SK-N-SH (cell line): ENCODE measurements at regions of chr1 and their contacts with region 1.

Region 1: DNA sequence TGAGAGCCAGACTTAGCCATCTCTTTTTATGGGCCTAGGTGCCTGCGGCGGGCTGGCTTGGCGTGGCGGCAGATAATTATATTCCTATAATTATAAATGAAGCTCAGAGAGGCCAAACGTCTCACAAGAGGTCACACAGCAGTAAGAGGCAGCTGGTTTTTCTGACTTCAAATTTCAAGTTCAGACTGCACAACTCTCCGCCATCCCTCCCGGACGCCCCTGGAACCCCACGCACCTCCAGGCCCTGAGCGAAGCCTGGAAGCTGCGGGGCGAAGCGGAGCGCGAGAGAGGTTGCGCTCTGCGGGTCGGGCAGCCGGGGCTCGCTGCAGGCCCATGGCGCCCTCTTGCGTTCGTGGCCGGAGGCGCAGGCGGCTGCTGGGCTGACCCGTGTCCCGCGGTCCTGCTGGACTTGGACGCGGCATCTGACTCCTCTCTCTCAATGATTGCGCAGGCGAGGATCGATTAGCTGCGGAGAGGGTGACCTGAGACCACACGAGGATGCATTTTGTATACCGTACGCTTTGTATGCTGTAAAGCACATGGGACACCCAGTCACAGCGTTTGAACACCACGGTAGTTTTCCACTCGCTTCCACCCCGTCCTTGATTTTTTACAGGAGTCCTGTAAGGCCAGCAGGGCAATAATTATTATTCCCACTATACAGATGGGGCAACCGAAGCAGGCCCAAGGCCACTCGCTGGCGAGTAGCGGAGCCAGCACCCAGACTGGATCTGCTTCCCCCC is 272.7 kb downstream of the FOXD2 start:
- DNase-seq: peak; percentile 96
- H3K4me3 ChIP-seq: peak overlapping the region in 1 of 2 experiments; percentile 58; a peak in 1 of 4 replicates
- H3K27ac ChIP-seq: no peak overlapping the region
- H3K4me1 ChIP-seq: peaks cover 0 to 23% of the 10 kb centered on the region in 2 experiments; a peak in 1 of 4 replicates
- H3K27me3 ChIP-seq: peaks cover 68% of the 10 kb centered on the region
- CTCF ChIP-seq: peak; percentile 93
- EP300 ChIP-seq: no peak
- RAD21 ChIP-seq: peak; percentile 92

Region 2: GRCh38 chr1:47137925-47138615 is 572.4 kb before region 1 on chr1:
- CTCF ChIA-PET with region 1: no interaction called
- POLR2A ChIA-PET with region 1: no interaction called
- DNase-seq: no peak
- H3K4me3 ChIP-seq: no peak overlapping the region
- H3K27ac ChIP-seq: no peak overlapping the region
- H3K4me1 ChIP-seq: no peaks in the 10 kb centered on the region
- H3K27me3 ChIP-seq: no peaks in the 10 kb centered on the region
- CTCF ChIP-seq: no peak
- EP300 ChIP-seq: no peak
- RAD21 ChIP-seq: no peak

Region 3: DNA sequence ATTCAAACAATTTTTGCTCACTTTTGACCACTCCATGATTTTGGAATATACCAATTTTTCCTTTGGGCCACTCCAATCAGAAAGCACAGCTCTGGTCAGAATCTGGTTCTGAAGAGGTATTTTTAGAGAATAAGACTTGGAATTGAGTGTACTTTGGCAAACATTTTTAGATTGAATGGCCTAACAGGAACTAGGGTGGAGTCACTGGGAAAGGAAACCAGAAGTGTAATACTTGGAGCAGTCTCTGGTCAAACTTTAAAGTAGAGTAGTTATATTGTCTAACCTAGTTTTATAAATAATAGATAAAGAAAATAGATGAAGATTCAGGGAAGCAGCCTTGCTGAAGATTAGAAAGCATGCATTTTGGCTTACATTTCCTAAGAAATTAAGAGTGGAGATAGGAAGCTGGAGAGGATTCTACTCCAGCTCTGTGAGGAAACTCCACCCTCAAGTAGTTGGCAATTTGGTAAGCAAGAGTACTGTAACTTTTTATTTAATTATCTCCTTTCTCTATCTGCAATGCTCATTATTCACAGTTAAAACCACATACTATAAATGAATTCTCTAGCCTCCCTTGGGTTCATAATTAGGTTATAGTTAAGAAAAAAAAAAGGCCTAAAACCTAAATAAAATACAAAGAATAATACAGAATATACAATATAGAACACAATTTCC is 412.3 kb before region 1 on chr1:
- CTCF ChIA-PET with region 1: no interaction called
- POLR2A ChIA-PET with region 1: no interaction called
- DNase-seq: no peak
- H3K4me3 ChIP-seq: no peak overlapping the region
- H3K27ac ChIP-seq: no peak overlapping the region
- H3K4me1 ChIP-seq: no peaks in the 10 kb centered on the region; a peak in 1 of 4 replicates
- H3K27me3 ChIP-seq: no peaks in the 10 kb centered on the region
- CTCF ChIP-seq: no peak
- EP300 ChIP-seq: no peak
- RAD21 ChIP-seq: no peak

Region 4: DNA sequence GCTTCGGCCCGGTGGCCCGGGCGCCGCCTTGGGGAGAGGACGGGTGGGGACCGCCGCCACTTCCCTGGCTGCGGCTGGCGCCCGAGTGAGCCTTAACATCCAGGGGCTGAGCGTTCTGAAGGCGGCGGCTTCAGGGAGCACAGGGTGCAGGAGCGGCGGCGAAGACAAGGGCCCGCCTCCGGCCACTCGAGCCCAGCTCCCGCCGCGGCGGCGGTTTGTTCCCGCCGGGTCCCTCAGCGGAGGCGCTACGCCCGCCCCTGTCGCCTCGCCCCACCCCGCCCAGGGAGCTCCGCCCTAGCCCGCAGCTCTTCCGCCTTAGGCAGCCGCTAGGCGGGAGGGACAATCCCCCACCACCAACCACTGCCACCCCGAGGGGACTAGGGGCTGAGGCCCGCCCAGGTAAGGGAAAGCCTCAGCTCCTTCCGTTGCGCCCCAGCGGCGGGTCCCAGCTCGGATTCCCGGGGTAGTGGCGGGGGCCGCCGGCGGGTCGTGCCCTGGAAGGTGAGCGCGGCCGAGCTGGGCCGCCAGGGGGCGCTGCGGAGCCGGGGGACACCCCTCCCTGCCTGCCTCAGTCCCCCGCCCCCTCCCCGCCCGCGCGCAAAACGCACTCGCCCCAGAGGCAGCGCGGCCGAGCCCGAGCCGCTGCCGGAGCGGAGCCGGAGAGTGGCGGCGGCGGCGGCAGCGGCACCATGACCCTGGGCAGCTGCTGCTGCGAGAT is 272.9 kb before region 1 on chr1 and contains the start of gene FOXD2:
- CTCF ChIA-PET with region 1: interaction called, 1,422 read pairs
- POLR2A ChIA-PET with region 1: interaction called, 3 read pairs
- DNase-seq: peak; percentile 96
- H3K4me3 ChIP-seq: peak within 1 kb of the TSS; percentile 49 to 87
- H3K27ac ChIP-seq: no peak within 1 kb of the TSS
- H3K4me1 ChIP-seq: peaks cover 0 to 10% of the 10 kb centered on the region in 2 experiments; a peak in 1 of 4 replicates
- H3K27me3 ChIP-seq: peaks cover 82% of the 10 kb centered on the region
- CTCF ChIP-seq: peak; percentile 84
- EP300 ChIP-seq: no peak
- RAD21 ChIP-seq: peak; percentile 19; the same call in 1 of the 2 replicates
- polyA plus RNA-seq, gene FOXD2: not detected in 2 replicates

Region 5: DNA sequence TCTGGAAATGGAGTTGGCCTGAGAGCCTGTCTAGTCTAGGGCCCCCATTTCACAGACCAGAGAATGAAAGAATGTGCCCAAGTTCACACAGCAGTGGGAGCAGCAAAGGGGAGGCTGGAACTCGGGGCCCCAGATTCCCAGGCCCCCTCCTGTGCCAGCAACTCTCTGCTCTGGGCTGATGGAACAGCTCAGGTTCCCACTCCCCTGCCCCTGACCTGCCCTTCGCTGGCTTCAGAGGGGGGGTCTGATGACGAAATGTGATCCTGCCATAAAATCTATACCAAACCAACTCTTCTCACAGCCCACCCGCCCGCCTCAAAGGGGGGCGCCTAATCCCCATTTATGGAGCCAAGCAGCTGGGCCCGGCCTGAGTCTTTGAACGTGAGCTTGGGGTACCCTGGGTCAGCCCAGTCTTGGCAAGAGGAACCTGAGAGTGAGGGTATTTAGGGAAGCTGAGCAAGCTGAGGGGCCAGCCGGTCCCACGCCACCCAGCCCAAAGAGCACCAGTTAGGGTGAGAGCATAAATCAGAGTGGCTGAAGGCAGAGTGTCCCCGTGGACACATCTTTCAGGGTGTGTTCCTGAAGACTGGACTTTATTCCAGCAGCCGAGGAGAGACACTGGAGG is 207.6 kb before region 1 on chr1:
- CTCF ChIA-PET with region 1: interaction called, 28 read pairs
- POLR2A ChIA-PET with region 1: no interaction called
- DNase-seq: no peak
- H3K4me3 ChIP-seq: no peak overlapping the region
- H3K27ac ChIP-seq: no peak overlapping the region
- H3K4me1 ChIP-seq: peaks cover 0 to 3% of the 10 kb centered on the region in 2 experiments; a peak in 1 of 4 replicates
- H3K27me3 ChIP-seq: peaks cover 13% of the 10 kb centered on the region
- CTCF ChIP-seq: no peak
- EP300 ChIP-seq: no peak
- RAD21 ChIP-seq: no peak

Region 6: DNA sequence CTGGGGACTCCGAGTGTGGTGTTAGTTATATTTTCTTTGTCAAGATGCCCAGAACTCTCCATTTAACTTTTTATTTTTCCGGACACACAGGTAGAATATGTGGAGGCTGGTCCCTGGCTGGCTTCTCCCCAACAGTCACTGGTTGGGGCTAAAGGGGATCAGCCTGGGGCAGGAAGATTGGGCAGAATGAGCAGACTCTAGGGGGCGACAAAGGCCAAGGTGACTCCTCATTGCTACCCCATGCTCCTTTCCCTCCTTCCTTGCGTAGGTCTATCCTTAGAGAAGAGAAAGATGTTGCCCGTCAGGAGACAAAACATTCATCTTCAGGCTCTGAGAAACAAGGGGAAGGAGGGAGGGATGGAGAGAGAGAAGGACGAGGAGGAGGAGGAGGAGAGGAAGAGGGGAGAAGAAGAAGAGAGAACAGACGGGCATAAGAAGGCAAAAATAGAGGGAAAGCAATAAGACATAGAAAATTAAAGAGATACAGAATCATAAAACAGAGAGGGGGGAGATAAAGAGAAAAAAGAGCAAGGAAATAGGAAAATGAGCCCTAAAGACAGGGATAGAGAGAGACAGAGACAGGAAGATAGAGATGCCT is 182.7 kb before region 1 on chr1:
- CTCF ChIA-PET with region 1: interaction called, 24 read pairs
- POLR2A ChIA-PET with region 1: no interaction called
- DNase-seq: no peak
- H3K4me3 ChIP-seq: no peak overlapping the region
- H3K27ac ChIP-seq: no peak overlapping the region
- H3K4me1 ChIP-seq: peaks cover under 1 to 2% of the 10 kb centered on the region in 2 experiments; a peak in 2 of 4 replicates
- H3K27me3 ChIP-seq: no peaks in the 10 kb centered on the region
- CTCF ChIP-seq: peak; percentile 21; the same call in 1 of the 2 replicates
- EP300 ChIP-seq: no peak
- RAD21 ChIP-seq: peak; percentile 44

Region 7: GRCh38 chr1:47684964-47685762 is 25.3 kb before region 1 on chr1:
- CTCF ChIA-PET with region 1: interaction called, 23 read pairs
- POLR2A ChIA-PET with region 1: no interaction called
- DNase-seq: peak; percentile 74
- H3K4me3 ChIP-seq: no peak overlapping the region
- H3K27ac ChIP-seq: peak overlapping the region in 1 of 2 experiments; percentile 32; a peak in 1 of 4 replicates
- H3K4me1 ChIP-seq: peaks cover 0 to 19% of the 10 kb centered on the region in 2 experiments; a peak in 2 of 4 replicates
- H3K27me3 ChIP-seq: peaks cover 5% of the 10 kb centered on the region; the same call in 1 of the 2 replicates
- CTCF ChIP-seq: no peak
- EP300 ChIP-seq: peak in 1 of 2 experiments; percentile 39; a peak in 1 of 4 replicates
- RAD21 ChIP-seq: no peak

Region 8: GRCh38 chr1:47732489-47732888 is 22.0 kb after region 1 on chr1:
- CTCF ChIA-PET with region 1: interaction called, 269 read pairs
- POLR2A ChIA-PET with region 1: no interaction called
- DNase-seq: no peak
- H3K4me3 ChIP-seq: no peak overlapping the region
- H3K27ac ChIP-seq: no peak overlapping the region
- H3K4me1 ChIP-seq: no peaks in the 10 kb centered on the region
- H3K27me3 ChIP-seq: no peaks in the 10 kb centered on the region; the same call in 1 of the 2 replicates
- CTCF ChIP-seq: no peak
- EP300 ChIP-seq: no peak
- RAD21 ChIP-seq: no peak